ENCODE measurements at regions of chr7 and their contacts with region 1.

Region 1: GRCh38 chr7:12403287-12404181 is at the start of gene VWDE:
- DNase-seq: peak in 1 of 2 experiments; percentile 81
- H3K4me3 ChIP-seq: peak within 1 kb of the TSS; percentile 89 to 97 (median 90)
- H3K27ac ChIP-seq: peak within 1 kb of the TSS; percentile 67
- H3K4me1 ChIP-seq: peaks cover 0 to 4% (median 2%) of the 10 kb centered on the region in 4 experiments; a peak in 3 of 7 replicates
- H3K27me3 ChIP-seq: no peaks in the 10 kb centered on the region
- CTCF ChIP-seq: peak in 1 of 3 experiments; percentile 1; a peak in 1 of 4 replicates
- EP300 ChIP-seq: no peak
- POLR2A ChIP-seq: peak in 1 of 2 experiments; percentile 82; a peak in 2 of 3 replicates
- RAD21 ChIP-seq: no peak
- total RNA-seq, gene VWDE: 18.9 and 21.2 TPM in 2 replicates

Region 2: DNA sequence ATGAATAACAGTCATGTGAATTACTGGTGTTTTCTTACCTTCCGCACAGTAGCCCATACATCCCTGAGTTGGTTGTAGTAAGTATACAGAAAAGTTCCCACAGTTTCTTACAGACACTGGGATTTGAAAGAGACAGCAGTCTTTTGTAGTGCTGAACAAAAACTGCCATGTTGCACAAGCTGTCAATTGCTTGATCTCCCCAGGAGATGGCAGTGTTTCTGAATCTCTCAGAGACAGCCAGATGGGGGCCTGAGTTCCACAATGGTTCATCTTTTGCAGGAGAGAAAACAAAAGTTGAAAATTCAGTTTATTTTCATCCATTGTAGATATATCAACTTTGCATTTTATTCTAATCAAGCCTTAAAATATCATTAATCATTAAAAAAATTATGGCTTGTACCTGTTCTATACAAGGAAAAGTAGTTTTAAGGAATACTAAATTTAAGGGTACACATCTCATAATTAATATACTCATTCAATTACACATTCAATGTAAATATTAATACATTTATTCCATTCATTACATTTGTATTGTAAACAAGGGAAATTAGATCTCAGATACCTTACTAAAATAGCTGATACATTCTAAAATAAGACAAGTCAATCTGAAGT is 14.3 kb before region 1 on chr7:
- CTCF ChIA-PET with region 1: interaction called, 12 read pairs
- POLR2A ChIA-PET with region 1: interaction called, 7 read pairs
- DNase-seq: peak in 1 of 2 experiments; percentile 5
- H3K4me3 ChIP-seq: no peak overlapping the region
- H3K27ac ChIP-seq: no peak overlapping the region
- H3K4me1 ChIP-seq: peaks cover 0 to 3% (median 1%) of the 10 kb centered on the region in 4 experiments; a peak in 3 of 7 replicates
- H3K27me3 ChIP-seq: peaks cover 0 to 1% (median 0%) of the 10 kb centered on the region in 4 experiments; a peak in 1 of 7 replicates
- CTCF ChIP-seq: peak; percentile 47 to 97 (median 83)
- EP300 ChIP-seq: no peak
- POLR2A ChIP-seq: no peak
- RAD21 ChIP-seq: peak; percentile 73 to 86

Measured in H1 (cell line).